Dendritic cell treated with granulocyte-macrophage colony-stimulating factor and Interleukin-4, amounts not matched to agents 40 ng/mL and 50 ng/mL, for 4 days (primary cell): ENCODE measurements at regions of chr14 and their contacts with region 1.

Region 1: DNA sequence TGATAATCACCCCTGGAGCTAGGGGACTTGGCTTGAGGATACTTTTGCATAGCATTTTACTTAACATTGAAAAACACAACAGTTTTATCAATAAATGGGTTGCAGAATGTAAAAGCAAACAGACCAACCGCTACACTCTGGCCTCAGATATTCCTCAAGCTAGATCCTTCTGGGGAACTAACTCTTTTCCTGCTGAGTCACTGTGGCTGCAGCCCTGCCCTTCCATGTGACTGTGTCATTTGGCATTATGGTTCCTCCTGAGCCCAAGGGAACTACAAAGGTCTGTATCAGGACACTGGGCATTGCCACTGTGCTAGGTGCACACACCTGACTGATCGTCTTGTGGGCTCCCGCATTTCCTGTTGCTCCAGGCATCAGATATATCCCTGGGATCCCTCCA is 56.6 kb downstream of the TTC9 start:
- H3K4me3 Mint-ChIP-seq: peak overlapping the region; percentile 49
- H3K27ac Mint-ChIP-seq: peak overlapping the region; percentile 59
- H3K4me1 Mint-ChIP-seq: peaks cover 84% of the 10 kb centered on the region
- H3K27me3 Mint-ChIP-seq: no peaks in the 10 kb centered on the region

Region 2: DNA sequence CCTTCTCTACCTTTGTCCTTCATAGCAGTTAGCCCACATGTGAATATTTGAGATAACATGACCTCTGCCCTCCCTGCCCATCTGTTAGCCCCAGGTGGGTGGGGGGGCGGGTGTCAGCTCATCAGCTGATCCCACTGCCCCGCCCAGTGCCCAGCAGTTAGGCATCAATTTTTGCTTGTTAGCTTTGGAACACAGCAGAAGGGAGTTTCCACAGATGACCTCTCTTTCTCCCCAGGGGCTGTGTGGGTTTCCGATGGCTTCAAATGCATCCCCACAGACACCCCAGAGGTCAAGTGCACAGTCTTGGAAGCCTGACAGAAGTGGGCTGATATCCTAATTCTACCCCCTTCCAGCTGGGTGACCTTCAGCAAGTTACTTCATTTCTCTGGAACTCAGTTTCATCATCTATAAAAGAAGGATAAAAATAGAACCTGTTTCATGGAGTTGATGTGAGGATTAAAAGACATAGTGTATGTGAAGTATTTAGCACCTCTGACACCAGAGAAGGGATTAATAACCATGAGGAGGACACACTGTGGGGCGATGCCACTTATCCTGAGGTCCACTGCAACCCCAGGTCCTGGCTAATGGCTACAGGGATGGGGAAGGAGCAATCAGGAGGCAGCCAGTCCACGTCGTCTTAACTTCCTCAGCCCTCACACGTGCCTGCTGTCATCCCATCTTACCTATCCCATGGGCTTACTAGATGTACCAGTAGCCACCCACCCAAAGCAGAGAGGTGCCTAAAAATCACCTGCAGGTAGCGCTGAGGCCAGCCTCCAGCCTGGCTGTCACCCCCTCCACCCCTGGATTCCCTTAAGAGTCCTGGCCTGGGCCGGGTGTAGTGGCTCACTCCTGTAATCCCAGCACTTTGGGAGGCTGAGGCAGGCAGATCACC is 34.4 kb before region 1 on chr14:
- intact Hi-C with region 1: loop called (anchors 5 kb)
- H3K4me3 Mint-ChIP-seq: no peak overlapping the region
- H3K27ac Mint-ChIP-seq: peak overlapping the region; percentile 57
- H3K4me1 Mint-ChIP-seq: peaks cover 64% of the 10 kb centered on the region
- H3K27me3 Mint-ChIP-seq: no peaks in the 10 kb centered on the region

Region 3: DNA sequence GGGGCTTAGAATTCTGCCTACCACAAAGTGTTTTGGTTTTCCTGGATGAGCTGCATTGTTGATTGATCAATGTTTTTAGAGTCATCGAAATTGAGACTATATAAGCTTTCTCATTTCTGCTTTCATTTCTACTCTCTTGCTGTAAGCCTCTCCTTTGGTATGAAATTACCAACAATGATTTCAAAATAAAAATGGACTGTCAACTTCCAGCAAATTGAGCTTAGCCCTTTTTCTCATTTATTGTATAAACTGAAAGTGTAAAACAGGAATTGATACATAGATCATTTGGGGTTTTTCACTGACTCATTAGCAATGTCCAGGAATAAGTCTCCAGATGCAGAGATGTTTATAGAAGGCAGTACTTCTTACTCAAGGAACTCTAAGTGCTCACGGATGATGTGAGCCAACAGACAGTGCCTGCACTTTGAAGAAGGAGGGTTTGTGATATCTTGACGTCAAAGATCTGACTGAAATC is 189.0 kb after region 1 on chr14:
- intact Hi-C with region 1: loop called (anchors 10 kb)
- H3K4me3 Mint-ChIP-seq: peak overlapping the region; percentile 47
- H3K27ac Mint-ChIP-seq: peak overlapping the region; percentile 79
- H3K4me1 Mint-ChIP-seq: peaks cover 60% of the 10 kb centered on the region
- H3K27me3 Mint-ChIP-seq: peaks cover 71% of the 10 kb centered on the region